Breast epithelium (tissue), 4 donors: ENCODE measurements at regions of chr3 and their contacts with region 1.

Region 1: DNA sequence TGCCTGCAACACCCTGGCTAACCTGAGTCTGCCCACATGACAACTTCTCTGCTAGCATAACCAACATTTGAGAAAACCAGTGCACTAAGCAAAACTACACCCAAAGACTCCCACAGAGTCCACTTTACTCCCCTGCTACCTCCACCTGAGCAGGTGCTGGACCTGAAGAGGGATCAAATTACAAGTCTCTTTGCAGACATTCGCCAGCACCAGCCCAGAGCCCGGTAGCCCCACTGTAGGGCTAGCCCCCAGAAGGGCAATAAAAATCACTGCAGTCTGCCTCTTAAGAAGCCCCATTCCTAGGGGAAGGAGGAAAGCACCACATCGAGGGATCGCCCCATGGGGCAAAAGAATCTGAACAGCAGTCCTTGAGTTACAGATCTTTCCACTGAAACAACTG is 472.2 kb downstream of the GRM7 start:
- DNase-seq: no peak
- H3K4me3 ChIP-seq: no peak overlapping the region
- H3K27ac ChIP-seq: no peak overlapping the region
- H3K4me1 ChIP-seq: no peaks in the 10 kb centered on the region
- H3K27me3 ChIP-seq: no peaks in the 10 kb centered on the region
- CTCF ChIP-seq: no peak
- POLR2A ChIP-seq: no peak

Region 2: GRCh38 chr3:6644070-6644929 is 688.8 kb before region 1 on chr3:
- intact Hi-C with region 1: loop called (anchors 10 kb)
- DNase-seq: no peak
- H3K4me3 ChIP-seq: no peak overlapping the region
- H3K27ac ChIP-seq: no peak overlapping the region
- H3K4me1 ChIP-seq: no peaks in the 10 kb centered on the region
- H3K27me3 ChIP-seq: no peaks in the 10 kb centered on the region
- CTCF ChIP-seq: no peak
- POLR2A ChIP-seq: no peak

Region 3: DNA sequence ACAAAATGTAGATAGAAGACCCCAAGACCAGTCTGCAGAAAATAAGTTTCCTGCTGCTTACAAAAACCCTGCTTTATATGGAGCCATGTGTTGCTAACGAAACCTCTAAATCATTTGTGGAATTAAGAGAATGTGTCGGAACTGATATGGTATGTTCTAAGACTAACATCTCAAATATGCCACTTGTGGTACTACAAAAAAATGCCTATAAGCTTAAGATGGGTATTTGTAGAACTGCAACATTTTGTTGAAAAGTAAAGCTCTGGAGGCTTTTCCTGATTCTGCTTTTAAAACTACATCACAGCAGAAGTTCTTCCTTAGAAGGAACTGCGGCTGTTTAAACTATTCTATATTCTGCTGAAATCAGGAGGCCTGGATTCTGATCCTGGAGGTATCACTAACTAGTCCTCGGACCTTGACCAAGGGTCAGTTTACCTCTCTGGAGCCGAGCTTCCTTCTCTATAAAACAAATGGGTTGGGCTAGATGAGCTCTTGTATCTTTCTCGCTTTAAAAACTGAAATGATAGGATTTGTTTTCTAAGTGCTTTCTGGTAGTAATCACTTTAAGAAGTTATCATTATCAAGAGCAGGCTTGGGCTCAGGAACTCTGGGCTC is 1555.3 kb after region 1 on chr3:
- intact Hi-C with region 1: no loop called
- DNase-seq: no peak
- H3K4me3 ChIP-seq: no peak overlapping the region
- H3K27ac ChIP-seq: no peak overlapping the region
- H3K4me1 ChIP-seq: no peaks in the 10 kb centered on the region
- H3K27me3 ChIP-seq: no peaks in the 10 kb centered on the region
- CTCF ChIP-seq: no peak
- POLR2A ChIP-seq: no peak